Activated CD4-positive, alpha-beta memory T cell treated with anti-CD3 and anti-CD28 coated beads, Interleukin-2, amount 10 ng/mL, durations not matched to agents 7 days and 5 days (primary cell): ENCODE measurements at regions of chrX and their contacts with region 1.

Region 1: GRCh38 chrX:54529552-54530357 is at the start of gene GNL3L:
- DNase-seq: peak; percentile 86
- H3K4me3 Mint-ChIP-seq: peak within 1 kb of the TSS; percentile 90
- H3K27ac Mint-ChIP-seq: peak within 1 kb of the TSS; percentile 91
- H3K4me1 Mint-ChIP-seq: peaks cover 32% of the 10 kb centered on the region
- H3K27me3 Mint-ChIP-seq: no peaks in the 10 kb centered on the region
- total RNA-seq, gene GNL3L: 34.9 to 36.7 TPM

Region 2: DNA sequence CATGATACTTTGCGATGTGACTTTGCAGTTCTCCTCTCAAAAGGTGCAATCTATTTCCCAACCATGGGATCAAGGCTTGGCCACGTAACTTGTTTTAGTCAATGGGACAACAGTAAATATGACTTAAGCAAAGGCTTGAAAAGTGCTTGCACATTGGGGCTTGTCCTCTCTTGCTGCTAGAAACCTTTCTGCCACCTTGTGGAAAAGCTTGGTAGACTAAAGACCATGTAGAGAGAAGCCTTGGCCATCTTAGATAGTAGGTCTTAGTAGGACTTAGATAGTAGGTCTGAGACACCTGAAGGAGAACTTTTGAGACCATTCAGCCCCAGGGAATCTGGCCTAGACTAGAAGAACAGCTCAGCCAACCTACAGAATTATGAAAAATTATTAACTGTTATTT is 567.9 kb before region 1 on chrX:
- CTCF ChIA-PET with region 1: no interaction called
- POLR2A ChIA-PET with region 1: no interaction called
- DNase-seq: no peak
- H3K4me3 Mint-ChIP-seq: no peak overlapping the region
- H3K27ac Mint-ChIP-seq: no peak overlapping the region
- H3K4me1 Mint-ChIP-seq: no peaks in the 10 kb centered on the region
- H3K27me3 Mint-ChIP-seq: no peaks in the 10 kb centered on the region

Region 3: DNA sequence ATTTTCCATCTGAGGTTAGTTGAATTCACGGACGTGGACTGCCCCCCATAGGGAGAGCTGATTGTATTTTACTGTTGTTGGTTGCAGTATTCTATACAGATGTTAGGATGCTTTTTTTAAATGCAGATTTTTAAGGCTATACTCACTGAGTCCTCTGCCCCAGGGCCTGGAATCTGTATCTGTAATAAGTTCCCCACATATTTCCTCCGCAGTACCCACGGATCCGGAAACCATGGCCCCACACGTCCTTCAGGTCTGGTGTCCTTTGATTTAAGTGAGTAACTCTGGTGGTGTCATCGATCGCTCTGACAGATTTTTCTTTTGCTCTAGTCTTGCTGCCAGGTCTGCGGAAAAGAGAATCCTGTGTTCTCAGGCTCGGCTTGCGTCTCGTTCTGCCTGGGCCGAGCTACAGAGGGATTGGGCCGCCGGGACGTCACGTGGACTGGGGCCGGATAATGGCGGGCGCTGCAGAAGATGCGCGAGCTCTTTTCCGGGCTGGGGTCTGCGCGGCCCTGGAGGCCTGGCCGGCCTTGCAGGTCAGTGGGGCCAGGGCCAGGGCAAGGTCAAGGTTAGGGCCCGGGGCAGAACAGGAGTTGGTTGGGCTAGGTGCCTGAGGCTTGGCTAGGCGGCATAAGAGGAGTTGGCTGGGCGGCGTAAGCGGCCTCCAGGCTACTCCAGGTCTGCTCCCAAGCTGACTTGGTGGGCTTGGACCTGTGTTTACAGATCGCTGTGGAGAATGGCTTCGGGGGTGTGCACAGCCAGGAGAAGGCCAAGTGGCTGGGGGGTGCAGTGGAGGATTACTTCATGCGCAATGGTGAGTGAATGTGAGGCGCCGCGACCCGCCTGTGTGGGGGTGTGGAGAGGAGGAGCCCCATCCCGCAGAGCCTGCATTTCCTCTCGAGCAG is 89.5 kb before region 1 on chrX and contains the start of gene TSR2:
- CTCF ChIA-PET with region 1: no interaction called
- POLR2A ChIA-PET with region 1: interaction called, 11 read pairs
- DNase-seq: peak; percentile 83
- H3K4me3 Mint-ChIP-seq: peak within 1 kb of the TSS; percentile 90
- H3K27ac Mint-ChIP-seq: peak within 1 kb of the TSS; percentile 79
- H3K4me1 Mint-ChIP-seq: peaks cover 24% of the 10 kb centered on the region
- H3K27me3 Mint-ChIP-seq: no peaks in the 10 kb centered on the region
- total RNA-seq, gene TSR2: 25.5 to 26.2 TPM

Region 4: GRCh38 chrX:54999717-55000598 is 470.2 kb after region 1 on chrX and contains the start of gene APEX2:
- CTCF ChIA-PET with region 1: no interaction called
- POLR2A ChIA-PET with region 1: interaction called, 10 read pairs
- DNase-seq: peak; percentile 90
- H3K4me3 Mint-ChIP-seq: peak within 1 kb of the TSS; percentile 97
- H3K27ac Mint-ChIP-seq: peak within 1 kb of the TSS; percentile 90
- H3K4me1 Mint-ChIP-seq: peaks cover 31% of the 10 kb centered on the region
- H3K27me3 Mint-ChIP-seq: no peaks in the 10 kb centered on the region
- total RNA-seq, gene APEX2: 25.5 to 26.8 TPM